HEK293T (cell line): ENCODE measurements at regions of chr16 and their contacts with region 1.

Region 1: GRCh38 chr16:30032083-30032819 is 1.2 kb upstream of the TLCD3B start:
- DNase-seq: peak; percentile 89

Region 2: DNA sequence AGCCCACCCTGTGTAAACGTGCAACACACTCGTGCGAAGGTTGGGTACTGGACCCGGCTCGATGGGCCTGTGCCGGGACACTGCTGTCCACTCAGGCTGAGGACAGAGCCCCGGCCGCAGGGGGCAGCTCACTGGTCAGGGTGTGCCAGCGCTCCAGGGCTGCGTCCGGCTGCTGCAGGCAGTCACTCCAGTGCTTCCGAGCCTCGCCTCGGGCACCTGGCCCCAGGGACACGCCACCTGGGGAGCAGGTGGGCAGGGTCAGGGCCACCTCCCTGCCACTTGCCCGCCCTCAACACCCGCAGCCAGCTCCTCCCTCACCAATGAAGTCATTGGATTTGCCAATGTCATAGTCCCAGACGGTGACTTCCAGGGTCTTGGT is 26.2 kb before region 1 on chr16:
- CTCF ChIA-PET with region 1: no interaction called
- POLR2A ChIA-PET with region 1: no interaction called
- DNase-seq: no peak

Region 3: DNA sequence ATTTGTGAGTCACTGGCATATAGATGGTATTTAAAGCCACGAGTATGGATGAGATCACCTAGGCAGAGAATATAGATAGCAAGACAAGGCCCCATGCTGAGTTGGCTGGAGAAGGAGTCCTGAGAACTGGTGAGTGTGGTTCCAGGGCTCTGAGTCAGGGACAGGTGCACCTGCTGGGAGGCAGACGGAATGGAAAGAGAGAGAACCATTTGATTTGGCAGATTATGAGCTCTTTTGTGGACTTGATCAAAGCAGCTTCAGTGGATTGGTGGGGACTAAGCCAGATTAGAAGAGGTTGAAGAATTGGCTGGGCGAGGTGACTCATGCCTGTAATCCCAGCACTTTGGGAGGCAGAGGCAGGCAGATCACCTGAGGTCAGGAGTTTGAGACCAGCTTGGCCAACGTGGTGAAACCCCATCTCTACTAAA is 13.5 kb before region 1 on chr16:
- CTCF ChIA-PET with region 1: interaction called, 10 read pairs
- POLR2A ChIA-PET with region 1: interaction called, 7 read pairs
- DNase-seq: no peak

Region 4: GRCh38 chr16:30104494-30104968 is 72.3 kb after region 1 on chr16:
- CTCF ChIA-PET with region 1: no interaction called
- POLR2A ChIA-PET with region 1: no interaction called
- DNase-seq: no peak